ENCODE measurements at regions of chr19 and their contacts with region 1.

Region 1: DNA sequence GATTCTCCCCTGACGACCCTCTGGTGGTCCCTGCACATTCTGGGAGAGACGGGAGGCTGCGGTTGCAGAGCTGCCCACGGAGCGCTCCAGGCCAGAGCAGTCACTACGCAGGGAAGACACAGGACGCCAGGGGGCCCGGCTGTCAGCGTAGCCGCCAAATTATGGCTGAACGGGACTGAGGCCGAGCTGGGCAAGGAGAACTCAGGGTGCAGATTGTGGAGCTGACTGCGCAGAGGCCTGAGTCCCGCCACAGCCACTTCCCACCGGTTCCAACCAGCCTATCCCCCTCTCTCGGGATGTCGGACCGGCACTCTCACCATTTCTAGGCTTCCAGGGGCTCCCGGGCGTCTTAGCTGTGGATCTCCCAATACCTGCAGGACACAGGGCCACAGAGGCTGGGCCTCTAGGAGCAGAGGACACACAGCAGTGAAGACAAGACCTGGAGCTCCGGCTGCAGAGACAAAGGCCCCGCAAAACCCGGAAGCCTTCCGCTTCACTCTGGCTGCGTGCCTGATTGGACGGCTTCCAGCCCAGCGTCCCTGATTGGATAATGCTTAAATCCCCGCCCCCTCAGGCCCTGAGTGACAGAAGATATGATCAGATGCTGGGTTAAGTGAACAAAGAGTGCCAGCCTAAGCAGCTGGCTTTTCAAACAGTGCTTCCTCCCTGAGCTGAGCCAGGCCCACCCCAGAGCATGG is at the start of gene ZNF737:
- DNase-seq: peak; percentile 86
- ATAC-seq: peak; percentile 97
- H3K4me3 Mint-ChIP-seq: peak within 1 kb of the TSS; percentile 98
- H3K27ac Mint-ChIP-seq: peak within 1 kb of the TSS; percentile 98
- H3K4me1 Mint-ChIP-seq: peaks cover 6% of the 10 kb centered on the region
- H3K27me3 Mint-ChIP-seq: no peaks in the 10 kb centered on the region
- total RNA-seq, gene ZNF737: 30.9 to 33.8 TPM

Region 2: GRCh38 chr19:20388826-20389225 is 176.6 kb before region 1 on chr19:
- POLR2A ChIA-PET with region 1: interaction called, 11 read pairs
- DNase-seq: no peak
- ATAC-seq: no peak
- H3K4me3 Mint-ChIP-seq: no peak overlapping the region
- H3K27ac Mint-ChIP-seq: no peak overlapping the region
- H3K4me1 Mint-ChIP-seq: no peaks in the 10 kb centered on the region
- H3K27me3 Mint-ChIP-seq: no peaks in the 10 kb centered on the region

Region 3: GRCh38 chr19:20423381-20424197 is 141.9 kb before region 1 on chr19:
- POLR2A ChIA-PET with region 1: interaction called, 33 read pairs
- DNase-seq: peak; percentile 52
- ATAC-seq: no peak
- H3K4me3 Mint-ChIP-seq: peak overlapping the region; percentile 96
- H3K27ac Mint-ChIP-seq: peak overlapping the region; percentile 98
- H3K4me1 Mint-ChIP-seq: peaks cover 8% of the 10 kb centered on the region
- H3K27me3 Mint-ChIP-seq: no peaks in the 10 kb centered on the region

Region 4: DNA sequence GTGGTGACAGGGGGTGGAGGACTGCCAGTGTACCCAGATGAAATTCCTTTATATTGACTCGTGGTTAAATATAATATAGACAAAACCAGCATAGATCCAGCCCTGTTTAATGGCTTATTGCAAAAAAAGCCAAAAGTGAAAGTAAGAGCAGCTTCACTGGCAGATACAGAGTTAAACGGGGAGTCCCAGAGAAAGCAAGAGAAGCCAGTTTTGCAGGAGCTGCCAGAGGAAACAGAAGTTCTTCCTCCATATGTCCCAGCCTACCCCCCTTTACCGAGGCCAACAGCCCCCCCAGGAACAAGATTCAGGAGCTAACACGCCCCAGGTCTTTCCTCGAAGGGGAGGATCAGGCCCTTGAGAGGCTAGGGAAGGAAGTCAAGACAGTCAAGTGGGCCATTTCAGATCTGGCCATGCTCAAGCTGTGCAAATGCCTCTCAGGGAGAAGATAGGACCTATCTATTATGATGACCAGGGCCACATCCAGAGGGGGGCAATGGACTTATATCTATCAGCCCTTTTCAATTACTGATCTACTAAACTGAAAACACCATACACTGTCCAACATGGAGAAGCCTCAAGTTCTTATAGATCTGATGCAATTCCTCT is 47.3 kb after region 1 on chr19:
- POLR2A ChIA-PET with region 1: no interaction called
- DNase-seq: no peak
- ATAC-seq: no peak
- H3K4me3 Mint-ChIP-seq: peak overlapping the region; percentile 21
- H3K27ac Mint-ChIP-seq: no peak overlapping the region
- H3K4me1 Mint-ChIP-seq: no peaks in the 10 kb centered on the region
- H3K27me3 Mint-ChIP-seq: no peaks in the 10 kb centered on the region

Region 5: DNA sequence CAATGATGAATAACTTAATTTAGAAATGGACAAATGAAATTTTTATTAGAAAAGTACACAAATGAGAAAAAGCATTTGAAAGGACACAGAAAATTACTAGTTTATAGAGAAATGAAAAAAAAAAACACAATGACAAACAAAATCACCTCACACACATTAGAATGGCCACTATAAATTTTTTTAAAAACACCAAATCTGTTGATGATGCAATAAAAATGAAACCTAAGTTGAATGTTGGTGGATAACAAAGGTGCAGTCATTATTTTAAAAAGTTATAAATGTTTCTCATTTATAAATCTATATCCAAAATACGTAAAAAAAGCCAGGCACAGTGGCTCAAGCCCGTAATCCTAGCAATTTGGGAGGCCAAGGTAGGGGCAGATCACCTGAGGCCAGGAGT is 75.1 kb after region 1 on chr19:
- POLR2A ChIA-PET with region 1: no interaction called
- DNase-seq: no peak
- ATAC-seq: no peak
- H3K4me3 Mint-ChIP-seq: no peak overlapping the region
- H3K27ac Mint-ChIP-seq: no peak overlapping the region
- H3K4me1 Mint-ChIP-seq: no peaks in the 10 kb centered on the region
- H3K27me3 Mint-ChIP-seq: no peaks in the 10 kb centered on the region

Region 6: DNA sequence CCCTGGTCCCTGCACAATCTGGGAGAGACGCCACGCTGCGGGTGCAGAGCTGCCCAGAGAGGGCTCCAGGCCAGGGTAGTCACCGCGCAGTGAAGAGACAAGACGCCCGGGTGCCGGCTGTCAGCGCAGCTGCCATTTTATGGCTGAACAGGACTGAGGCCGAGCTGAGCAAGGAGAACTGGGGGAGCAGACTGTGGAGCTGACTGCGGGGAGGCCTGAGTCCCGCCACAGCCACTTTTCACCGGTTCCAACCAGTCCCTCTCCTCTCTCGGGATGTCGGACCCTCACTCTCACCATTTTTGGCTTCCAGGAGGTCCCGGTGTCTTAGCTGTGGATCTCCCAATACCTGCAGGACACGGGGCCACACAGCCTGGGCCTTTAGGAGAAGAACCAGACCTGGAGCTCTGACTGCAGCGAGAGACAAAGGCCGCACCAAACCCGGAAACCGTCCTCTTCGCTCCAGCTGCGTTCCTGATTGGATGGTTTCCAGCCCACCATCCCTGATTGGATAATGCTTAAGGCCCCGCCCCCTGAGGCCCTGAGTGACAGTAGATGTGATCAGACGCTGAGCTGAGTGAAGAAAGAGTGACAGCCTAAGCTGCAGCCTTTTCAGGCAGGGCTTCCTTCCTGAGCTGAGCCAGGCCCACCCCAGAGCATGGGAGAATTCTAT is 95.8 kb after region 1 on chr19 and contains the start of gene ZNF626:
- POLR2A ChIA-PET with region 1: interaction called, 32 read pairs
- DNase-seq: peak; percentile 85
- ATAC-seq: peak; percentile 99
- H3K4me3 Mint-ChIP-seq: peak within 1 kb of the TSS; percentile 94
- H3K27ac Mint-ChIP-seq: peak within 1 kb of the TSS; percentile 98
- H3K4me1 Mint-ChIP-seq: peaks cover 10% of the 10 kb centered on the region
- H3K27me3 Mint-ChIP-seq: no peaks in the 10 kb centered on the region
- total RNA-seq, gene ZNF626: 13.6 to 17.8 TPM

Region 7: GRCh38 chr19:20923077-20923871 is 357.8 kb after region 1 on chr19 and contains the start of gene ZNF85:
- POLR2A ChIA-PET with region 1: interaction called, 15 read pairs
- DNase-seq: peak; percentile 85
- ATAC-seq: peak; percentile 99
- H3K4me3 Mint-ChIP-seq: peak within 1 kb of the TSS; percentile 97
- H3K27ac Mint-ChIP-seq: peak within 1 kb of the TSS; percentile 99
- H3K4me1 Mint-ChIP-seq: peaks cover 13% of the 10 kb centered on the region
- H3K27me3 Mint-ChIP-seq: no peaks in the 10 kb centered on the region
- total RNA-seq, gene ZNF85: 22.7 to 25.0 TPM

Region 8: DNA sequence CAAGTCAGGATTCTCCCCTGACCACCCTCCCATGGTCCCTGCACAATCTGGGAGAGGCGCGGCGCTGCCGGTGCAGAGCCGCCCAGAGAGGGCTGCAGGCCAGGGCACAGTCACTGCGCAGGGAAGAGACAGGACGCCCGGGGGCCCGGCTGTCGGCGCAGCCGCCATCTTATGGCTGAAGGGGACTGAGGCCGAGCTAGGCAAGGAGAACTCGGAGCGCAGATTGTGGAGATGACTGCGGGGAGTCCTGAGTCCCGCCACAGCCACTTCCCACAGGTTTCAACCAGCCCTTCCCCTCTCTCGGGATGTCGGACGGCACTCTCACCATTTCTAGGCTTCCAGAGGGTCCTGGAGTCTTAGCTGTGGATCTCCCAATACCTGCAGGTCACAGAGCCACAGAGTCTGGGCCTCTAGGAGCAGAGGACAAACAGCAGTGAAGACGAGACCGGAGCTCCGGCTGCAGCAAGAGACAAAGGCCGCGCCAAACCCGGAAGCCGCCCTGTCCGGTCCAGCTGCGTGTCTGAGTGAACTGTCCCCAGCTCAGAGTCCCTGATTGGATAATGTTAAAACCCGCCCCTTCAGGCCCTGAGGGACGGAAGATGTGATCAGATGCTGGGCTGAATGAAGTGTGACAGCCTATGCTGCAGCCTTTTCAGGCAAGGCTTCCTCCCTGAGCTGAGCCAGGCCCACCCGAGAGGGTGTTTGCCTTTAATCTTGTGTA is 763.6 kb after region 1 on chr19 and contains the start of gene ZNF708:
- POLR2A ChIA-PET with region 1: interaction called, 10 read pairs
- DNase-seq: peak; percentile 77
- ATAC-seq: peak; percentile 100
- H3K4me3 Mint-ChIP-seq: peak within 1 kb of the TSS; percentile 99
- H3K27ac Mint-ChIP-seq: peak within 1 kb of the TSS; percentile 99
- H3K4me1 Mint-ChIP-seq: peaks cover 17% of the 10 kb centered on the region
- H3K27me3 Mint-ChIP-seq: no peaks in the 10 kb centered on the region
- total RNA-seq, gene ZNF708: 28.5 to 30.7 TPM